Caco-2 (cell line): ENCODE measurements at regions of chr10 and their contacts with region 1.

Region 1: GRCh38 chr10:103481974-103482531 is 3.0 kb upstream of the CALHM3 start:
- DNase-seq: peak in 1 of 2 experiments; percentile 57
- H3K4me3 ChIP-seq: no peak overlapping the region
- H3K4me3 Mint-ChIP-seq: no peak overlapping the region
- H3K27ac Mint-ChIP-seq: no peak overlapping the region
- H3K4me1 ChIP-seq: no peaks in the 10 kb centered on the region
- H3K4me1 Mint-ChIP-seq: no peaks in the 10 kb centered on the region
- H3K27me3 ChIP-seq: no peaks in the 10 kb centered on the region
- H3K27me3 Mint-ChIP-seq: no peaks in the 10 kb centered on the region
- CTCF ChIP-seq: peak; percentile 62 to 72

Region 2: GRCh38 chr10:103416436-103417147 is 65.5 kb before region 1 on chr10:
- CTCF ChIA-PET with region 1: interaction called, 7 read pairs
- POLR2A ChIA-PET with region 1: no interaction called
- intact Hi-C with region 1: loop called (anchors 1 kb)
- DNase-seq: peak; percentile 59 to 60
- H3K4me3 ChIP-seq: no peak overlapping the region
- H3K4me3 Mint-ChIP-seq: no peak overlapping the region
- H3K27ac Mint-ChIP-seq: no peak overlapping the region
- H3K4me1 ChIP-seq: no peaks in the 10 kb centered on the region
- H3K4me1 Mint-ChIP-seq: no peaks in the 10 kb centered on the region
- H3K27me3 ChIP-seq: no peaks in the 10 kb centered on the region
- H3K27me3 Mint-ChIP-seq: no peaks in the 10 kb centered on the region
- CTCF ChIP-seq: peak; percentile 40 to 53

Region 3: DNA sequence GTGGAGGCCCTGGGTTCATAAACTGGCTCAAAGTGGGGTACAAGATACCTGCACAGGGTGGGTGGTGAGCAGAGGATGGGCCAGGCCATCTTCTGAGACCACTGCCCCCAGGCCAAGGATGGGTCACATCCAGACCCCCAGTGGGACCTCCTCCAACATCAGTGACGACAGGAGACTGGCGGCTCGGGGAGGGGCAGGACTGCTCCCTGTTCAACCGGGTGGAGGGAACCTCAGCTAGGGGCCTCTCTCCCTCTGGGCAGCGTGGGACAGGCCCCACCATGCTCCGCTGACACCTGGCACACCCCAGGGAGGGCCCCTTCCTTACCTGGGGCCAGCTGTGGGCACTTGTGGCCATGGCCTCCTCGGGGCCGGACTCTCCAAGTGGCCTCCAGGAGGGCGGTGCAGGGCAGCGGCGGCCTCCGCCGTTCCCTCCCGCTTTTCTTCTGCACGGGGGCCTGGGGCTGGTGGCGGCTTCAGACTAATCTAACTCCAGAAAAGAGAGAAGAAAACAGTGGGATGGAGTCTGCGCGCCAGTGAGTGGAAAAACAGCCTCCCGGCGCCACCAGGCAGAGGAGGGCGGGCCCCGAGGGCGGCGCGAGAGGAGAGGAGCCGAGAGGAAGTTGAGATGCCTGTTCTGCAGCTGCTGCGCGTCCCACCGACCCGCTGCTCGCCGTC is 30.1 kb before region 1 on chr10 and contains the start of gene CALHM2:
- CTCF ChIA-PET with region 1: interaction called, 5 read pairs
- POLR2A ChIA-PET with region 1: no interaction called
- intact Hi-C with region 1: loop called (anchors 5 kb)
- DNase-seq: peak; percentile 56 to 58
- H3K4me3 ChIP-seq: peak within 1 kb of the TSS; percentile 30
- H3K4me3 Mint-ChIP-seq: peak within 1 kb of the TSS; percentile 70
- H3K27ac Mint-ChIP-seq: no peak within 1 kb of the TSS
- H3K4me1 ChIP-seq: peaks cover 5% of the 10 kb centered on the region; the same call in 1 of the 2 replicates
- H3K4me1 Mint-ChIP-seq: no peaks in the 10 kb centered on the region
- H3K27me3 ChIP-seq: no peaks in the 10 kb centered on the region
- H3K27me3 Mint-ChIP-seq: no peaks in the 10 kb centered on the region
- CTCF ChIP-seq: no peak
- total RNA-seq, gene CALHM2: 0.52 and 0.58 TPM in 2 replicates